Prostate gland (tissue), 2 donors: ENCODE measurements at regions of chr5 and their contacts with region 1.

Region 1: GRCh38 chr5:157476702-157477408 is 16.8 kb downstream of the NIPAL4 start:
- DNase-seq: peak; percentile 53
- H3K4me3 ChIP-seq: no peak overlapping the region
- H3K27ac ChIP-seq: no peak overlapping the region
- H3K4me1 ChIP-seq: no peaks in the 10 kb centered on the region
- H3K27me3 ChIP-seq: no peaks in the 10 kb centered on the region
- CTCF ChIP-seq: peak; percentile 35 to 73 (median 70)
- POLR2A ChIP-seq: no peak

Region 2: DNA sequence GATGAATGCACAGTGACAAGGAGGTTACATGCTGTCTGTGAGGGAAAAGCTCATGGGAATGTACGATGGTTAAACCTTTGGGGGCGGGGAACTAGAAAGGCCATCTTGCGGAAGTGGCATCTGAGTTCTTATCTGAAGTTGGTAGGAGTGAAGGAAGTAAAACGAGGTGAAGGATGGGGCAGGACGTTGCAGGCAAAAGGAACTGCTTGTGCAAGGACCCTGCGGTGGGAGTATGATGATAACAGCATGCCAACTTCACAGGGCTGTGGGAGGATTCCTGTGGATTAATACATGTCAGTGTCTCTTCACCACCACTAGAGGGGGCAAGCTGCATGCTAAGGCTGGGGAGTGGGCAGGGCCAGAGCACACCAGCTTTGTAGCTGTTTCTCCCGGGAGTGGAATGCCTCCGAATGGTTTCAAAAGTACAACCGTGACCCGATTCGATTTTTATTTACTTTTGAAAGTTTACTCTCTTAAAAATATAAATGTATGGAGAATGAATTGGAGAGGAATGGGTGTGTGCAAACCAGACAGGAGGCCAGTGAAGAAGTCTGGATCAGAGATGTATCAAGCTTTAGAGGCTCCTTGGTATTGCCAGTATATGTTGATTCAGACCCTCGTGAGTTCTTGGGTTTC is 148.5 kb before region 1 on chr5:
- intact Hi-C with region 1: loop called (anchors 2 kb)
- DNase-seq: peak; percentile 64
- H3K4me3 ChIP-seq: no peak overlapping the region
- H3K27ac ChIP-seq: no peak overlapping the region
- H3K4me1 ChIP-seq: no peaks in the 10 kb centered on the region
- H3K27me3 ChIP-seq: no peaks in the 10 kb centered on the region
- CTCF ChIP-seq: peak; percentile 81 to 90 (median 85)
- POLR2A ChIP-seq: no peak

Region 3: GRCh38 chr5:157670662-157671591 is 194.1 kb after region 1 on chr5 and contains the start of gene C5orf52:
- intact Hi-C with region 1: no loop called
- DNase-seq: peak; percentile 39
- H3K4me3 ChIP-seq: peak within 1 kb of the TSS; percentile 40 to 49
- H3K27ac ChIP-seq: peak within 1 kb of the TSS; percentile 18 to 45
- H3K4me1 ChIP-seq: no peaks in the 10 kb centered on the region
- H3K27me3 ChIP-seq: no peaks in the 10 kb centered on the region
- CTCF ChIP-seq: no peak
- POLR2A ChIP-seq: no peak
- total RNA-seq, gene C5orf52: 5.9 TPM in 1 of 2 donors, not detected in the other

Region 4: GRCh38 chr5:157743163-157744050 is 266.6 kb after region 1 on chr5 and contains the start of gene LSM11:
- intact Hi-C with region 1: loop called (anchors 10 kb)
- DNase-seq: peak; percentile 79
- H3K4me3 ChIP-seq: peak within 1 kb of the TSS; percentile 61 to 78
- H3K27ac ChIP-seq: peak within 1 kb of the TSS; percentile 72
- H3K4me1 ChIP-seq: peaks cover 5% of the 10 kb centered on the region
- H3K27me3 ChIP-seq: no peaks in the 10 kb centered on the region
- CTCF ChIP-seq: peak; percentile 95 to 100 (median 99)
- POLR2A ChIP-seq: peak; percentile 32
- total RNA-seq, gene LSM11: 4.1 to 8.1 TPM